ENCODE measurements at regions of chr12 and their contacts with region 1.

Region 1: DNA sequence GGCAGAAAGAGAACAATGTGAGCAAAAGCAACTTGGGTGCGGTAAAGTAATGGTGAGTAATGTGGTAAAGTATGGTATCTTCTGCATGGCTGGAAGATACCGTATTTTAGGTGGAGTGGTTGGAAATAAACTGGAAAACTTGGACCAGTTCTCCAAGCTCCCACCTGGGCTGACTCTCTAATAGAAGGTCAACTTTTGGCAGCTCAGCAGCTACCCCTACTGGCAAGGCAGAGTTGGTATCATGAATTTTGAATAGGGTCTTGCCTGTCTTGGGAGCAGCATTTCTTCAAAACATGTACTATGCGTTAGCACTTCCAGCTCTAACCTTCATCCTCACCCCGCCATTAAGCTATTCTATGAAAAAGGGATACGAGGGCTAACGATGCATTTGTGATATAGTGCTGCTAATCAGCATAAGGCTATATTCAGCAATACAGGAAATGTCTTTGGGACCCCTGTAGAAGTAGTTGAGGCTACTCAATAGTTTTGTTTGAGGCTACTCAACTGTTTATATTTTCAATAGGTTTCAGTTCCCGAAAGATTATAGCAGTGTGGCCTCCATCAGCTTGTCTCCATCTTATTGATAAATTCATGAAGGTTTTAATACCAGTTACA is 276.3 kb upstream of the FAR2 start:
- DNase-seq: no peak
- ATAC-seq: peak; percentile 16

Region 2: GRCh38 chr12:28172434-28173030 is 700.2 kb before region 1 on chr12:
- intact Hi-C with region 1: loop called (anchors 10 kb)
- DNase-seq: no peak
- ATAC-seq: no peak